ENCODE measurements at regions of chr2 and their contacts with region 1.

Region 1: GRCh38 chr2:189096769-189097447 is 82.7 kb downstream of the COL5A2 start:
- DNase-seq: no peak
- H3K4me3 ChIP-seq: no peak overlapping the region
- H3K27ac ChIP-seq: peak overlapping the region in 2 of 4 donors; percentile 1 to 5
- H3K4me1 ChIP-seq: peaks cover 7 to 50% (median 33%) of the 10 kb centered on the region in 4 donors
- H3K27me3 ChIP-seq: no peaks in the 10 kb centered on the region
- CTCF ChIP-seq: no peak
- EP300 ChIP-seq: no peak
- POLR2A ChIP-seq: no peak

Region 2: DNA sequence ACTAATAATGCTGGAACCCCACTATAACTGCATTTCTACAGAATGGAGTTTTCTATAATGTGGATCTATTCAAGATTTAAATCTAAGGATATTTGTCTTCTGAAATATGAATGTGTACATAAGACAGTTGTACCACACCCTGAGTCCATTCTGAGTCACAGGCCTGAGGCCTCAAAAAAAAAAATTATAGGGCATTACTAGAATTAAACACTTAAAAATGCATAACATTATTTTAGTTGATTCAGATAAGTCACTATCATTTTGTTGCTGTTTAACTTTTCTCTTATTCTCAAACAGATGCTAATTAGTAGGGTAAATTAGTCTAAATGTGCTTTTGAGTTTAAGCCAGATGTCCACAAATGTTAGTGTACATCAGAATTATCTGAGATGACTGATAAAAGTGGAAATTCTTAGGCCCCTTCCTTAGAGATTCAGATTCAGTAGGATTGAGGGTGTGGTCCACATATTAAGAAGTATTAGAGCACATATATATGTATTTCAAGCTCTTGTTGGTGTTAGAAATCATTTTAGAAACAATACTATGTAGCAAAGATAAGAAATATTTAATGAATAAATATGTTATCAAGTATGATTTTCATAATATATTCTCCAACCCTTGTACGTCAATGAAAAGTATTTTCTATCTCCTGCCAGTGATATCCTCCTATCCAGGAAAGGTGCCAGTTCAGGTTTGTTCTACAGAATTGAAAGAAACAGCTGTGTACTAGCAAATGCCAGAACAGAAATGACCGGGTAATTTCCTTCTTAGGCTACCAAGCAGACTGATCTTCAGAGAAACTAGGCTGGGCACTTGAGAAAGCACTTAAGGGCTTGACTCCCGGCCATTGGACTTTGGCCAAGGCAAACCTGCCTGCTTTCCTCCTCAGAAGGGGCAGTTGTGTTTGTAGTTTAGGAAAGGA is 125.2 kb after region 1 on chr2:
- intact Hi-C with region 1: no loop called
- DNase-seq: no peak
- H3K4me3 ChIP-seq: no peak overlapping the region
- H3K27ac ChIP-seq: no peak overlapping the region
- H3K4me1 ChIP-seq: peaks cover 0 to 14% (median 5%) of the 10 kb centered on the region in 4 donors
- H3K27me3 ChIP-seq: no peaks in the 10 kb centered on the region
- CTCF ChIP-seq: no peak
- EP300 ChIP-seq: no peak
- POLR2A ChIP-seq: no peak

Region 3: DNA sequence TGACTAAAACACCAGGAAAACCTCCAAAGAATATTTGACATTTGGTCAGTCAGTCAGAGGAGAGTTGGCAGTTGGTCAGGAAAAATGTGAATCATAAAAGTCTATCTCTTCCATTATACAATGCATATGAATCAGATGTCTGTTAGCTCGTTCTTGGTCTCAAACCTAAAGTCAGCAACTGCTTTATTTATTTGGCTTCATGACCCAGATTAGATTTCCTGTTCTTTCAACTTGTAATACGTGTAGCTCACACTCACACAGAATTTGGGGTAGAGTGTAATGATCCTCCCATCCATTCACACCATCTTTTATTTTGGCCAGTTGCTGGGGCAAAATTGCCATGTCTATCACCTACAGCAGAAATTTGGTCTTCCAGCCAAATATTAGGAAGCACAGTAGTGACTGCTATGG is 164.5 kb after region 1 on chr2:
- intact Hi-C with region 1: no loop called
- DNase-seq: no peak
- H3K4me3 ChIP-seq: no peak overlapping the region
- H3K27ac ChIP-seq: no peak overlapping the region
- H3K4me1 ChIP-seq: peaks cover 0 to 27% (median 23%) of the 10 kb centered on the region in 4 donors
- H3K27me3 ChIP-seq: no peaks in the 10 kb centered on the region
- CTCF ChIP-seq: no peak
- EP300 ChIP-seq: no peak
- POLR2A ChIP-seq: no peak

Region 4: GRCh38 chr2:189287982-189288521 is 191.1 kb after region 1 on chr2:
- intact Hi-C with region 1: loop called (anchors 5 kb)
- DNase-seq: no peak
- H3K4me3 ChIP-seq: no peak overlapping the region
- H3K27ac ChIP-seq: no peak overlapping the region
- H3K4me1 ChIP-seq: peaks cover 0 to 34% (median 18%) of the 10 kb centered on the region in 4 donors
- H3K27me3 ChIP-seq: no peaks in the 10 kb centered on the region
- CTCF ChIP-seq: peak; percentile 51 to 68 (median 64)
- EP300 ChIP-seq: no peak
- POLR2A ChIP-seq: no peak

Region 5: DNA sequence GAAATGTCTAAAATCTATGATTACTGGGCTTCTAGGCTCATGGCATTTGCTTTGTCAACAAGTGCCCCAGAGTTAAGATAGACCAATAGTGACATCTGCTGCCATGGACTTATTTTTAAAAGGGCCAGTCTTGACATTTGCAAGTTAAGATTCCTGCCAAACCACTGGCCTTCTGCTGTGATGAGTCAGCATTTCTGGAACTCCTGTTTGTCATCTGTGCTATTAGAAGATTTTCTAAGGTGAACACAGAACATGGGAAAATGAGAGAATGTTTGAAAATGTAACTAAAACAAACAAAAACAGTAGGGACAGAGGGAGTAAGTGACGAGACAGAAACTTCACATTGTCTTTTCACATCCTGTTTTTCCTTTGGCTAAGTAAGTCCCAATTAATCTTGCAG is 250.6 kb after region 1 on chr2:
- intact Hi-C with region 1: loop called (anchors 10 kb)
- DNase-seq: no peak
- H3K4me3 ChIP-seq: no peak overlapping the region
- H3K27ac ChIP-seq: peak overlapping the region; percentile 64 to 80 (median 78)
- H3K4me1 ChIP-seq: peaks cover 6 to 62% (median 26%) of the 10 kb centered on the region in 4 donors
- H3K27me3 ChIP-seq: no peaks in the 10 kb centered on the region
- CTCF ChIP-seq: peak; percentile 18 to 42 (median 21)
- EP300 ChIP-seq: no peak
- POLR2A ChIP-seq: no peak

Region 6: DNA sequence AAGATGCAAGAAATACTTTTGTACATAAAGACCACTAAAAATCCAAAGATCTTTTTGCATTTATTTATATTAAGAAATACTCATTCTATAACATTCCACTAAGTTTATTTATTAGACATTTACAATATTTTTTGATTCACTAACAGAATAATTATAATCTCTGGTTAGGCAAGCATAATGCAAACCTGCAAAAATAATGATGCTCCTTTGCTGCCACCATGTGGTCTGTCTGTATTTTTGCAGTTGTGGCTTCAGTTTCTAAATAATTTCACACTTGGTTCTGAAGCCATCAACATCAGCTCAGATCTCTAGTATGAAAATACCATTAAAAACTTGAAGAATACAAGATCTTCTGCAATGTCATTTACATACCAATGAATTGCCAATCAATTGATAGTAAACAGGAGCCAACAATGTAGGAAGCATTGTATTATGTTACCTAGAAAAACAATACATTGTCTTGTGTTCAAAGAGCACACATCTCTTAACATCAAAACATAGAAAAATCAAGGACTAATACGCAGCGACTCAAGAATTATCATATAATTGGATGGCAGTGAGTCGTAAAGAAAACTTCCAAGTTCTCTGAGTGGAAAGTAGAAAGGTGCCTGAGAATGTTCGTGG is 315.5 kb after region 1 on chr2:
- intact Hi-C with region 1: loop called (anchors 2 kb)
- DNase-seq: no peak
- H3K4me3 ChIP-seq: no peak overlapping the region
- H3K27ac ChIP-seq: peak overlapping the region; percentile 71 to 80 (median 72)
- H3K4me1 ChIP-seq: peaks cover 0 to 43% (median 27%) of the 10 kb centered on the region in 4 donors
- H3K27me3 ChIP-seq: no peaks in the 10 kb centered on the region
- CTCF ChIP-seq: peak; percentile 76 to 80 (median 77)
- EP300 ChIP-seq: no peak
- POLR2A ChIP-seq: no peak

Region 7: DNA sequence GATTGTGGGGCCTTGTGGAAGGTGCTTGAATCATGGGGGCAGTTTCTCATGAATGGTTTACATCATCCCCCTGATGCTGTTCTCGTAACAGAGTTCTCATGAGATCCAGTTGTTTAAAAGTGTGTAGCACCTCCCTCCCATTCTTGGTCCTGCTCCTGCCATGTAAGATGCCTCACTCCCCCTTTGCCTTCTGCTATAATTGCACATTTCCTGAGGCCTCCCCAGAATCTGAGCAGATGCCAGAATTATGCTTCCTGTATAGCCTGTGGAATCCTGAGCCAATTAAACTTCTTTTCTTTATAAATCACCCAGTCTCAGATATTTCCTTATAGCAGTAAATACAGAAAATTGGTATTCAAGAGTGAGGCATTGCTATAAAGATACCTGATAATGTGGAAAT is 328.8 kb after region 1 on chr2:
- intact Hi-C with region 1: no loop called
- DNase-seq: no peak
- H3K4me3 ChIP-seq: no peak overlapping the region
- H3K27ac ChIP-seq: no peak overlapping the region
- H3K4me1 ChIP-seq: no peaks in the 10 kb centered on the region
- H3K27me3 ChIP-seq: no peaks in the 10 kb centered on the region
- CTCF ChIP-seq: no peak
- EP300 ChIP-seq: no peak
- POLR2A ChIP-seq: no peak

Measured in esophagus muscularis mucosa (tissue), 4 donors.